ENCODE measurements at regions of chr6 and their contacts with region 1.

Region 1: GRCh38 chr6:96626759-96627364 is 63.9 kb downstream of the FHL5 start:
- DNase-seq: peak in 1 of 2 donors; percentile 37
- ATAC-seq: no peak
- H3K4me3 ChIP-seq: no peak overlapping the region
- H3K4me3 Mint-ChIP-seq: no peak overlapping the region
- H3K27ac ChIP-seq: no peak overlapping the region
- H3K27ac Mint-ChIP-seq: no peak overlapping the region
- H3K4me1 ChIP-seq: no peaks in the 10 kb centered on the region
- H3K4me1 Mint-ChIP-seq: peaks cover 0 to 5% of the 10 kb centered on the region in 2 donors
- H3K27me3 ChIP-seq: no peaks in the 10 kb centered on the region
- H3K27me3 Mint-ChIP-seq: peaks cover 0 to 6% of the 10 kb centered on the region in 2 donors
- CTCF ChIP-seq: no peak

Region 2: GRCh38 chr6:96611342-96611991 is 15.4 kb before region 1 on chr6:
- intact Hi-C with region 1: no loop called
- DNase-seq: no peak
- ATAC-seq: no peak
- H3K4me3 ChIP-seq: no peak overlapping the region
- H3K4me3 Mint-ChIP-seq: no peak overlapping the region
- H3K27ac ChIP-seq: no peak overlapping the region
- H3K27ac Mint-ChIP-seq: no peak overlapping the region
- H3K4me1 ChIP-seq: no peaks in the 10 kb centered on the region
- H3K4me1 Mint-ChIP-seq: no peaks in the 10 kb centered on the region
- H3K27me3 ChIP-seq: no peaks in the 10 kb centered on the region
- H3K27me3 Mint-ChIP-seq: peaks cover 0 to 5% of the 10 kb centered on the region in 2 donors
- CTCF ChIP-seq: no peak

Region 3: DNA sequence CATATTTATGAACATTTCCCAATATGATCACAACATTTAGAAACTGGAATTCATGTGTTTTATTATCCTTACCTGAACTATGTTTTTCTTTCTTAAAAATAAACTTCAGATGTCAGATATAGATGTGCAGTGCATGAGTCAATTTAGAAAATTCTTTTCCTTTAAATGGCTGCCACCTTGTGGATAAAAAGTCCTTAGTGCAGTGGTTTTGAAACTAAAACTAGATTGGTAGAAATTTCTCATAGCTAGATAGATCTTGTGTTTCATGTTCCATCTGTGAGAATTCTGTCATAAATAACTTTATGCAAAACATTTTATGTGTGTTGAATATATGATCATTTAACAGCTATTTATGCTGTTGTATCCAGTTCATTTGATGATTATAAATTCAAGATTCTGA is 432.6 kb after region 1 on chr6:
- intact Hi-C with region 1: loop called (anchors 2 kb)
- DNase-seq: peak in 1 of 2 donors; percentile 58
- ATAC-seq: peak in 2 of 3 donors; percentile 48 to 57
- H3K4me3 ChIP-seq: no peak overlapping the region
- H3K4me3 Mint-ChIP-seq: no peak overlapping the region
- H3K27ac ChIP-seq: no peak overlapping the region
- H3K27ac Mint-ChIP-seq: no peak overlapping the region
- H3K4me1 ChIP-seq: no peaks in the 10 kb centered on the region
- H3K4me1 Mint-ChIP-seq: no peaks in the 10 kb centered on the region
- H3K27me3 ChIP-seq: no peaks in the 10 kb centered on the region
- H3K27me3 Mint-ChIP-seq: peaks cover 0 to 10% of the 10 kb centered on the region in 2 donors
- CTCF ChIP-seq: peak; percentile 52